T-cell (primary cell): ENCODE measurements at regions of chr12 and their contacts with region 1.

Region 1: GRCh38 chr12:64796208-64796845 is 28.1 kb upstream of the TBC1D30 start:
- DNase-seq: peak in 30 of 35 experiments; percentile 9 to 85 (median 50)
- ATAC-seq: peak; percentile 77 to 84 (median 80)
- H3K4me3 ChIP-seq: no peak overlapping the region
- H3K4me3 Mint-ChIP-seq: no peak overlapping the region
- H3K27ac ChIP-seq: no peak overlapping the region
- H3K27ac Mint-ChIP-seq: no peak overlapping the region
- H3K4me1 ChIP-seq: no peaks in the 10 kb centered on the region
- H3K4me1 Mint-ChIP-seq: no peaks in the 10 kb centered on the region
- H3K27me3 ChIP-seq: peaks cover 0 to 12% of the 10 kb centered on the region in 2 experiments
- H3K27me3 Mint-ChIP-seq: peaks cover 24% of the 10 kb centered on the region in 2 donors

Region 2: DNA sequence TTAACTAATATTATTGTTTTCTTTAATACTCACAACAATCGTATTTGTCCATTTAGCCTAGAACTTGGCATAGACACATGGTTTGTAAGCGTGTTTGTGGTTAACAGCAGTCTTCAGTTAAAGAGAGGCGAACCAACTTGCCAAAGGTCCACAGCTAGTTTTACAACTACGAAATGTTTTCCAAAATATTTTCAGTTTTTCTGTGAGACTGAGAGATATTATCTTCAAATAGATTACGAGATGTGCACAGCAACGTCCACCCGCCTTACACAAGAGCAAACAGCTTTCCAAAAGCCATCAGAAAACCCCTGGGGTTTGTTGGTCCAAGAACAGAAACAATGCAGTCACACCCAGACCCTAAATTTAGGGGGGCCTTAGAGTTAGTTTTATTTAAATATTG is 244.6 kb before region 1 on chr12:
- CTCF ChIA-PET with region 1: interaction called, 6 to 15 read pairs
- POLR2A ChIA-PET with region 1: no interaction called
- DNase-seq: no peak
- ATAC-seq: no peak
- H3K4me3 ChIP-seq: no peak overlapping the region
- H3K4me3 Mint-ChIP-seq: no peak overlapping the region
- H3K27ac ChIP-seq: no peak overlapping the region
- H3K27ac Mint-ChIP-seq: no peak overlapping the region
- H3K4me1 ChIP-seq: peaks cover 3 to 4% of the 10 kb centered on the region in 2 experiments
- H3K4me1 Mint-ChIP-seq: peaks cover 7 to 13% (median 10%) of the 10 kb centered on the region in 3 donors
- H3K27me3 ChIP-seq: peaks cover 0 to 4% of the 10 kb centered on the region in 2 experiments
- H3K27me3 Mint-ChIP-seq: peaks cover 0 to 2% of the 10 kb centered on the region in 2 donors

Region 3: DNA sequence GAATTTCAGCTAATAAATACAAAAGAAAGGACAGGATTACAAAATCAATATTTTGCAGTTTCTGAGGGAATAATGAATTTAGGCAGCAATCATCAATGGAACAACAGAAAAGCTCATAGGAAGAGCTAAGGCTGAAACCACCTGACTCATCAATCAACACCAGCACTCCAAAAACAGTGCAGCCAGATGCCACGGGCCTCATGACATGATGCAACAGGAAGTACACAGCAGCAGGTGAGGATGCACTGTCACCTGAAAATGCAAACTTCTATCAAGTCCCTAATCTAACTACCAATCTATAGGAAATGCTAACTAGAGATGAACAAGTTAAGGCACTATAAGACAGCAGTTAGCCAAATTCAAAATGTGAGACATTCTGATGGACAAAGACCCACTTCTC is 58.8 kb before region 1 on chr12:
- CTCF ChIA-PET with region 1: no interaction called
- POLR2A ChIA-PET with region 1: no interaction called
- DNase-seq: peak in 10 of 35 experiments; percentile 4 to 34 (median 15)
- ATAC-seq: peak; percentile 54 to 87 (median 74)
- H3K4me3 ChIP-seq: no peak overlapping the region
- H3K4me3 Mint-ChIP-seq: no peak overlapping the region
- H3K27ac ChIP-seq: no peak overlapping the region
- H3K27ac Mint-ChIP-seq: peak overlapping the region; percentile 68 to 83
- H3K4me1 ChIP-seq: peaks cover 0 to 2% of the 10 kb centered on the region in 2 experiments
- H3K4me1 Mint-ChIP-seq: peaks cover 9 to 14% (median 11%) of the 10 kb centered on the region in 3 donors
- H3K27me3 ChIP-seq: no peaks in the 10 kb centered on the region
- H3K27me3 Mint-ChIP-seq: no peaks in the 10 kb centered on the region

Region 4: GRCh38 chr12:64780531-64781279 is 15.6 kb before region 1 on chr12:
- CTCF ChIA-PET with region 1: interaction called, 4 to 14 read pairs
- POLR2A ChIA-PET with region 1: interaction called in 1 of 2 experiments, 5 read pairs
- DNase-seq: peak in 6 of 35 experiments; percentile 5 to 18 (median 11)
- ATAC-seq: peak; percentile 56 to 66 (median 59)
- H3K4me3 ChIP-seq: peak overlapping the region; percentile 30 to 75
- H3K4me3 Mint-ChIP-seq: peak overlapping the region; percentile 63 to 87 (median 82)
- H3K27ac ChIP-seq: no peak overlapping the region
- H3K27ac Mint-ChIP-seq: no peak overlapping the region
- H3K4me1 ChIP-seq: peaks cover 6 to 16% of the 10 kb centered on the region in 2 experiments
- H3K4me1 Mint-ChIP-seq: peaks cover 16 to 20% (median 16%) of the 10 kb centered on the region in 3 donors
- H3K27me3 ChIP-seq: peaks cover 18 to 26% of the 10 kb centered on the region in 2 experiments
- H3K27me3 Mint-ChIP-seq: peaks cover 59 to 63% of the 10 kb centered on the region in 2 donors

Region 5: DNA sequence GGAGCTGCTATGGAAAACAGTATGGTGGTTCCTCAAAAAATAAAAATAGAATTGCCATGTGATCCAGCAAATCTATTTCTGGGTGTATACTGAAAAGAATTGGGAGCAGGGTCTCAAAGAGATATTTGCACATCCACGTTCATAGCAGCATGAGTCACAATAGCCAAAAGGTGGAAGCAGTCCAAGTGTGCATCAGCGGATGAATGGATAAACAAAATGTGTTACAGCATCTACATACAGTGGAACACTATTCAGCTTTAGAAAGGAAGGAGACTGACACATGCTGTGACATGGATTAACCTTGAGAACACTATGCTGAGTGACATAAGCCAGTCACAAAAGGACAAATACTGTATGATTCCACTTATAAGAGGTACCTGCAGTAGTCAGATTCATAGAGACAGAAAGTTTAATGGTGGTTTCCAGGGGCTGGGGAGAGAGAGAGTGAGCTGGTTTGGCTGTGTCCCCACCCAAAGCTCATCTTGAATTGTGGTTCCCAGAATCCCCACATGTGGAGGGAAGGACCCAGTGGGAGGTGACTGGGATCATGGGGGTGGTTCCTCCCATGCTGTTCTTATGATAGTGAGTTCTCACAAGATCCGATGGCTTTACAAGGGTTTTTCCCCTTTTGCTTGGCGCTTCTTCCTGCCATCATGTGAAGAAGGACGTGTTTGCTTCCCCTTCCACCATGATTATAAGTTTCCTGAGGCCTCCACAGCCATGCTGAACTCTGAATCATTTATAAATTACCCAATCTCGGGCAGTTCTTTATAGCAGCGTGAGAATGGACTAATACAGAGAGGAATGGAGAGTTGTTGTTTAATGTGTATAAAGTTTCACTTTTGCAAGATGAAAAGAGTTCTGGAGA is 10.5 kb after region 1 on chr12:
- CTCF ChIA-PET with region 1: interaction called, 8 to 15 read pairs
- POLR2A ChIA-PET with region 1: no interaction called
- DNase-seq: no peak
- ATAC-seq: no peak
- H3K4me3 ChIP-seq: no peak overlapping the region
- H3K4me3 Mint-ChIP-seq: no peak overlapping the region
- H3K27ac ChIP-seq: no peak overlapping the region
- H3K27ac Mint-ChIP-seq: no peak overlapping the region
- H3K4me1 ChIP-seq: peaks cover 0 to 3% of the 10 kb centered on the region in 2 experiments
- H3K4me1 Mint-ChIP-seq: peaks cover 0 to 4% (median 2%) of the 10 kb centered on the region in 3 donors
- H3K27me3 ChIP-seq: peaks cover 0 to 9% of the 10 kb centered on the region in 2 experiments
- H3K27me3 Mint-ChIP-seq: peaks cover 39 to 49% of the 10 kb centered on the region in 2 donors

Region 6: GRCh38 chr12:65232476-65233077 is 436.2 kb after region 1 on chr12:
- CTCF ChIA-PET with region 1: interaction called, 3 to 21 read pairs
- POLR2A ChIA-PET with region 1: no interaction called
- DNase-seq: peak in 1 of 35 experiments; percentile 44
- ATAC-seq: peak in 1 of 4 experiments; percentile 32
- H3K4me3 ChIP-seq: no peak overlapping the region
- H3K4me3 Mint-ChIP-seq: no peak overlapping the region
- H3K27ac ChIP-seq: no peak overlapping the region
- H3K27ac Mint-ChIP-seq: peak overlapping the region in 1 of 2 donors; percentile 31
- H3K4me1 ChIP-seq: peaks cover 0 to 2% of the 10 kb centered on the region in 2 experiments
- H3K4me1 Mint-ChIP-seq: peaks cover 5 to 11% (median 10%) of the 10 kb centered on the region in 3 donors
- H3K27me3 ChIP-seq: no peaks in the 10 kb centered on the region
- H3K27me3 Mint-ChIP-seq: no peaks in the 10 kb centered on the region